ENCODE measurements at regions of chr6 and their contacts with region 1.

Region 1: GRCh38 chr6:149925974-149926777 is 3.3 kb upstream of the RAET1G start:
- DNase-seq: peak; percentile 82
- ATAC-seq: peak; percentile 75
- H3K4me3 Mint-ChIP-seq: peak overlapping the region; percentile 15
- H3K27ac Mint-ChIP-seq: no peak overlapping the region
- H3K4me1 Mint-ChIP-seq: peaks cover 30% of the 10 kb centered on the region
- H3K27me3 Mint-ChIP-seq: peaks cover 85% of the 10 kb centered on the region

Region 2: GRCh38 chr6:149840345-149841075 is 85.7 kb before region 1 on chr6:
- CTCF ChIA-PET with region 1: interaction called, 12 read pairs
- POLR2A ChIA-PET with region 1: no interaction called
- DNase-seq: peak; percentile 63
- ATAC-seq: peak; percentile 85
- H3K4me3 Mint-ChIP-seq: no peak overlapping the region
- H3K27ac Mint-ChIP-seq: no peak overlapping the region
- H3K4me1 Mint-ChIP-seq: no peaks in the 10 kb centered on the region
- H3K27me3 Mint-ChIP-seq: peaks cover 11% of the 10 kb centered on the region

Measured in activated CD8-positive, alpha-beta T cell treated with anti-CD3 and anti-CD28 coated beads, Interleukin-2, amount 10 ng/mL, durations not matched to agents 7 days and 5 days (primary cell).